ENCODE measurements at regions of chr19 and their contacts with region 1.

Region 1: GRCh38 chr19:48835734-48836088 is 580 bp downstream of the HSD17B14 start:
- DNase-seq: peak; percentile 98
- H3K4me3 ChIP-seq: peak overlapping the region in 2 of 3 donors; percentile 16 to 27
- H3K27ac ChIP-seq: peak overlapping the region; percentile 69 to 92 (median 87)
- H3K4me1 ChIP-seq: peaks cover 15 to 18% of the 10 kb centered on the region in 2 donors
- H3K27me3 ChIP-seq: no peaks in the 10 kb centered on the region
- CTCF ChIP-seq: peak; percentile 67 to 98 (median 94)
- POLR2A ChIP-seq: peak; percentile 47 to 84

Region 2: DNA sequence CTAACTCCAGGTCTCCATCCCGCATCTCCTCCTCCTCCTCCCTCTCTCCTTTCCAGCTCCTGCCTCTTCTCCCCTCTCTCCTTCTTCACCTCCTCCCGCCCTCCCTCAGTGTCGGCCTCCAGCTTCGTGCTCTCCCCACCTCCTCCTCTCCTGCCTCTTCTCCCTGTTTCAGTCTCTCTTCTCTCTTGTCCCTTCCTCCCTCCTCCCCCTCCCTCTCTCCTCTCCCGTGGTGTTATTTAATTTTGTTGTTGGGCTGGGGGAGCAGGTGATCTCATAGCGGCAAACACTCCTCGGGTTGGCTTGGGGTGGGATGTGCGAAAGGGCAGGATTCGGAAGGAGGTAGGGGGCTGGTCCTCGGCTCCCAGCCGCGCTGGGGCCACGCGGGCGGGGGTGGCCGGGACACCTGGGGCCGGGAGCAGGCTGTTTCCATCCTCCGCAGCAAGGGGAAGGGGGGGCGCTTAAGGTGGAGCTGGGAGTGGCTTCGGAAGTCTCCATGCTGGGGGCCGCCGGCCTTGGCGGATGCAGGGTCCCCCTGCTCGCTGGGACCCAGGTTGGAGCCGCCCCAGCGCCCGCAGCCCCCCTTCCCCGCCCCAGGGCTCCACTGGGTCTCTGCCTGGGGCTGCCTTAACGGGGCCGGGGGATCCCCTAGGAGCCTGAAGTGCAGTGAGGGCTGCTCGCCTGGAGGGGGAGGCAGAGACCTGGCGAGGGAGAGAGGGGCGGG is 189.6 kb before region 1 on chr19 and contains the start of gene CA11:
- intact Hi-C with region 1: loop called (anchors 10 kb)
- DNase-seq: peak; percentile 90 to 93
- H3K4me3 ChIP-seq: peak within 1 kb of the TSS; percentile 20 to 51 (median 41)
- H3K27ac ChIP-seq: peak within 1 kb of the TSS; percentile 88 to 94 (median 89)
- H3K4me1 ChIP-seq: peaks cover 13 to 23% of the 10 kb centered on the region in 2 donors
- H3K27me3 ChIP-seq: no peaks in the 10 kb centered on the region
- CTCF ChIP-seq: peak; percentile 59 to 93 (median 84)
- POLR2A ChIP-seq: peak in 1 of 2 donors; percentile 35
- total RNA-seq, gene CA11: 4.6 to 13.4 (median 6.3) TPM

Region 3: DNA sequence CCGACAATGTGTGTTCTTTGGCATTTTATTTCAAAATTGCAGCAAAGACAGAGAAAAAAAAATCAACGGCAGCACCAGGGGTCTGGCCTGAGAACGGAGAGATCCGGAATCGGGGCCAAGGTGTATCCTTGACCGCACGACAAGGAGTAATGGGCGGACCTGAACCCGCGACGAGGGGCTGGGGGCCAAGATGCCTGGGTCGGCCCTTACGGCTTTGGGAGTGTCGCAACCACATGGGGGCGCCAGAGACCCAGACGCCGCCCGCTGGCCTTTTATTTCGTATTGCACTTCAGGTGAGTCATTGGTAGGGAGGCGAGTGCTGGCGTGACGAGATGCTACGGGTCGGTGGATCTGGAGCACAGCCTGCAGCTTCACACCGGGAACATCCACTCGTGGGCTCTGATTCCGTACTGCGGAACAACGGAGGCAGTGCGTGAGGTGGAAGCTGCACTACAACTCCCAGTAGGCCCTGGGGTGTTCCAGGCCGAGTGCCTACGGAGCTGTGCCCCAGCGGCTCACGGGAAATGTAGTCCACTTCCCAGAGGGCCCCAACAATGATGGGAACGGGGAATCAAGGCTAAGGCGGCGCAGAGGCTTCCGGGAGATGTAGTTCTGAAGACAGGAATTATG is 40.5 kb before region 1 on chr19:
- intact Hi-C with region 1: loop called (anchors 2 kb)
- DNase-seq: peak; percentile 95 to 97
- H3K4me3 ChIP-seq: no peak overlapping the region
- H3K27ac ChIP-seq: peak overlapping the region; percentile 85 to 98 (median 86)
- H3K4me1 ChIP-seq: peaks cover 6 to 18% of the 10 kb centered on the region in 2 donors
- H3K27me3 ChIP-seq: no peaks in the 10 kb centered on the region
- CTCF ChIP-seq: peak; percentile 83 to 99 (median 97)
- POLR2A ChIP-seq: peak in 1 of 2 donors; percentile 15

Region 4: DNA sequence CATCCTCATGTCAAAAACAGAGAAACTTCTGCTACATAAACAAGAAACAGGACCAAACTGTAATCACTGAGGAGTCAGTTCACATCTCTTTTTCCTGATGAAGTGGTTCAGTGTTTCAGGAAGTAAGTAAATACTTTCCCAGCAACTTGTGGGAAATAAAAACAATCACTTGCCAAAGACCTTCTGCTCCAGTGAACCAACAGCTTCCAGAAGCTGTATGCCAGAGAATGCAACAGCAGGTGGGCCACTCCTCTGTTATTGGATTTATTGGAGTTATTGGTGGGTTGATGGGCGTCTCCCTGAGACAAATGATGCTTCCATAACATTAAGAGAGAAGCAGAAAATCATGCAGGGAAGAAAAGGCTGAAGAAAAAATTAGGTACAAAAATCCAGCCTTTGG is 479.4 kb after region 1 on chr19:
- intact Hi-C with region 1: no loop called
- DNase-seq: no peak
- H3K4me3 ChIP-seq: no peak overlapping the region
- H3K27ac ChIP-seq: no peak overlapping the region
- H3K4me1 ChIP-seq: no peaks in the 10 kb centered on the region
- H3K27me3 ChIP-seq: no peaks in the 10 kb centered on the region
- CTCF ChIP-seq: no peak
- POLR2A ChIP-seq: no peak